ENCODE measurements at regions of chr4 and their contacts with region 1.

Region 1: DNA sequence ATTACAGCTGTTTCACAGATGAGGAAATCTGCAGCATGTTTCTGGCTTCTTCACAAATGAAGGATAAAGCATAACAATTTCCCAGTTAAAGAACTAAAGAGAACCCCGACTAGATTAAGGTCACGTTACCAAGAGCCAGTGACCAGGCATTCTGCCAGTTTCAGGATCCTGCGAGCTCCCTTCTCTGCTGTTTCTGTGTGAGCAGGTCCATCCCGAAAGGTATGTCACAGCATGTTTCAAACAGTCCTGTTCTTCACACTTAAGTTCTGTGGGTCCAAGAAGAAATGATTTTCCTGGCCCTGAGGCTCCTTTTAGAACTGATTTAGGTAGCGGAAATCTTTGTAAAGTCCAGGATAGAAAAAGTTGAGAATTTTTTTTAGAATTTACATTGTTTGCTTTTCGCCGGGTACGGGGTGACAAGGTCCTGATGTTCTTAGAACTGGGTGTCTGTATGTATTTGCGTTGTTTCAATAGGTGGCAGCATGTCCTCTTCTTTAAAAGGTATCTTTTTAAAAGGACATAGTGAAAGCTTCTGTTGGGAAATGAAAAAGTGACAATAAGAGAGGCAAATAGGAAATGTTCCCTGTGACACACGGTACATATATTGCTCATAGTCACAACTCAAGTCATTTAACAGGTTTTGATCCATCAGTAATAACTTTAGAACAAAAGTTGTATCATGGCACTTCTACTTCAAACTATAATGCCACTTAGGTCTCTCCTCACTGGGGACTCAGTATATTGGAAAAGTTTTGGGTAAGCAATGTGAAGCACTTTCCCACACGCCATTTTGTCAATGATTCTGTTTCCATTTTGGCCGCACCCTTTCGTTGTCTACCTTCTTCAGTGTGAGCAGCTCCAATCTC is 18.4 kb downstream of the IL21 start:
- DNase-seq: peak in 5 of 9 donors; percentile 13 to 33 (median 24)
- ATAC-seq: peak; percentile 42
- H3K4me3 ChIP-seq: no peak overlapping the region
- H3K4me3 Mint-ChIP-seq: peak overlapping the region in 6 of 10 donors; percentile 3 to 39 (median 26)
- H3K27ac ChIP-seq: no peak overlapping the region
- H3K27ac Mint-ChIP-seq: peak overlapping the region in 2 of 9 donors; percentile 10 to 29
- H3K4me1 ChIP-seq: no peaks in the 10 kb centered on the region
- H3K4me1 Mint-ChIP-seq: peaks cover 0 to 26% (median 5%) of the 10 kb centered on the region in 7 donors
- H3K27me3 ChIP-seq: no peaks in the 10 kb centered on the region
- H3K27me3 Mint-ChIP-seq: peaks cover 0 to 19% (median 0%) of the 10 kb centered on the region in 5 donors

Region 2: GRCh38 chr4:122652379-122652778 is 49.9 kb after region 1 on chr4:
- CTCF ChIA-PET with region 1: no interaction called
- POLR2A ChIA-PET with region 1: interaction called, 3 read pairs
- intact Hi-C with region 1: loop called (anchors 5 kb)
- DNase-seq: peak in 6 of 9 donors; percentile 18 to 39 (median 23)
- ATAC-seq: peak; percentile 57
- H3K4me3 ChIP-seq: no peak overlapping the region
- H3K4me3 Mint-ChIP-seq: no peak overlapping the region
- H3K27ac ChIP-seq: no peak overlapping the region
- H3K27ac Mint-ChIP-seq: no peak overlapping the region
- H3K4me1 ChIP-seq: no peaks in the 10 kb centered on the region
- H3K4me1 Mint-ChIP-seq: peaks cover 0 to 12% (median 0%) of the 10 kb centered on the region in 7 donors
- H3K27me3 ChIP-seq: no peaks in the 10 kb centered on the region
- H3K27me3 Mint-ChIP-seq: no peaks in the 10 kb centered on the region

Region 3: GRCh38 chr4:122673252-122673651 is 70.7 kb after region 1 on chr4:
- CTCF ChIA-PET with region 1: no interaction called
- POLR2A ChIA-PET with region 1: no interaction called
- intact Hi-C with region 1: no loop called
- DNase-seq: no peak
- ATAC-seq: no peak
- H3K4me3 ChIP-seq: no peak overlapping the region
- H3K4me3 Mint-ChIP-seq: no peak overlapping the region
- H3K27ac ChIP-seq: no peak overlapping the region
- H3K27ac Mint-ChIP-seq: no peak overlapping the region
- H3K4me1 ChIP-seq: no peaks in the 10 kb centered on the region
- H3K4me1 Mint-ChIP-seq: peaks cover 0 to 57% (median 8%) of the 10 kb centered on the region in 7 donors
- H3K27me3 ChIP-seq: no peaks in the 10 kb centered on the region
- H3K27me3 Mint-ChIP-seq: peaks cover 0 to 16% (median 0%) of the 10 kb centered on the region in 5 donors

Region 4: GRCh38 chr4:122827879-122828601 is 225.5 kb after region 1 on chr4:
- CTCF ChIA-PET with region 1: no interaction called
- POLR2A ChIA-PET with region 1: no interaction called
- intact Hi-C with region 1: loop called in 1 of 2 experiments (anchors 10 kb)
- DNase-seq: peak in 7 of 9 donors; percentile 9 to 40 (median 27)
- ATAC-seq: peak; percentile 81
- H3K4me3 ChIP-seq: peak overlapping the region; percentile 44
- H3K4me3 Mint-ChIP-seq: peak overlapping the region; percentile 74 to 86 (median 84)
- H3K27ac ChIP-seq: no peak overlapping the region
- H3K27ac Mint-ChIP-seq: peak overlapping the region in 1 of 9 donors; percentile 27
- H3K4me1 ChIP-seq: peaks cover 5 to 8% of the 10 kb centered on the region in 2 donors
- H3K4me1 Mint-ChIP-seq: peaks cover 7 to 22% (median 11%) of the 10 kb centered on the region in 7 donors
- H3K27me3 ChIP-seq: peaks cover 10 to 16% of the 10 kb centered on the region in 2 donors
- H3K27me3 Mint-ChIP-seq: peaks cover 71 to 81% (median 80%) of the 10 kb centered on the region in 5 donors

Region 5: DNA sequence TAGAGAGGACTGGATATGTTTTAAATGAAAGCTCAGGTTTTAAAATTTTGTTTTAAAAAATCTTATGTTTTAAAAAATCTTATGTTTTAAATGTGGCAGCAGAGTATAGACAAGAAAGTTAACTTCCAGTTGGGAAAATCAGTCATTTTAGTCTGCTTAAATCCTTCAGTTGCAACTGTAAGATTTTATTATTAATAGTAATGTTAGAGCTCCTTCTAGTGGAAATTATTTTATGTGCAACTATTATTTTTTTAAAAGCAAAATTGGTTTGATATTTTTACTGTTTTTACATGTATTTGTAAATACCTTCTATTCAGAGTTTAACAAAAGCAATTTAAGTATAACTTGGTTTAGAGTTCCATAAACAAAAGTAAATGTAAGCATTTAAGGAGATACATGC is 328.4 kb after region 1 on chr4:
- CTCF ChIA-PET with region 1: no interaction called
- POLR2A ChIA-PET with region 1: no interaction called
- intact Hi-C with region 1: loop called (anchors 1 kb)
- DNase-seq: peak in 3 of 9 donors; percentile 6 to 17 (median 14)
- ATAC-seq: no peak
- H3K4me3 ChIP-seq: no peak overlapping the region
- H3K4me3 Mint-ChIP-seq: no peak overlapping the region
- H3K27ac ChIP-seq: no peak overlapping the region
- H3K27ac Mint-ChIP-seq: no peak overlapping the region
- H3K4me1 ChIP-seq: no peaks in the 10 kb centered on the region
- H3K4me1 Mint-ChIP-seq: peaks cover 0 to 36% (median 7%) of the 10 kb centered on the region in 7 donors
- H3K27me3 ChIP-seq: no peaks in the 10 kb centered on the region
- H3K27me3 Mint-ChIP-seq: no peaks in the 10 kb centered on the region

Measured in naive thymus-derived CD4-positive, alpha-beta T cell (primary cell).